Dendritic cell treated with granulocyte-macrophage colony-stimulating factor and Interleukin-4, amounts not matched to agents 40 ng/mL and 50 ng/mL, for 4 days (primary cell): ENCODE measurements at regions of chr11 and their contacts with region 1.

Region 1: GRCh38 chr11:20609727-20610707 is 10.6 kb downstream of the SLC6A5 start:
- H3K4me3 Mint-ChIP-seq: peak overlapping the region; percentile 48
- H3K27ac Mint-ChIP-seq: no peak overlapping the region
- H3K4me1 Mint-ChIP-seq: peaks cover 25% of the 10 kb centered on the region
- H3K27me3 Mint-ChIP-seq: peaks cover 80% of the 10 kb centered on the region

Region 2: GRCh38 chr11:20387241-20388095 is 222.5 kb before region 1 on chr11 and contains the start of gene PRMT3:
- intact Hi-C with region 1: loop called (anchors 2 kb)
- H3K4me3 Mint-ChIP-seq: peak within 1 kb of the TSS; percentile 98
- H3K27ac Mint-ChIP-seq: peak within 1 kb of the TSS; percentile 99
- H3K4me1 Mint-ChIP-seq: peaks cover 6% of the 10 kb centered on the region
- H3K27me3 Mint-ChIP-seq: no peaks in the 10 kb centered on the region

Region 3: GRCh38 chr11:20790622-20791021 is 180.6 kb after region 1 on chr11:
- intact Hi-C with region 1: no loop called
- H3K4me3 Mint-ChIP-seq: no peak overlapping the region
- H3K27ac Mint-ChIP-seq: no peak overlapping the region
- H3K4me1 Mint-ChIP-seq: no peaks in the 10 kb centered on the region
- H3K27me3 Mint-ChIP-seq: no peaks in the 10 kb centered on the region